Naive thymus-derived CD4-positive, alpha-beta T cell (primary cell): ENCODE measurements at regions of chr20 and their contacts with region 1.

Region 1: GRCh38 chr20:37178839-37179670 is at the starts of genes MROH8 and RPN2:
- DNase-seq: peak; percentile 83 to 95 (median 92)
- ATAC-seq: peak; percentile 96
- H3K4me3 ChIP-seq: peak within 1 kb of the TSS; percentile 85
- H3K4me3 Mint-ChIP-seq: peak within 1 kb of the TSS; percentile 89 to 99 (median 96)
- H3K27ac ChIP-seq: peak within 1 kb of the TSS; percentile 87
- H3K27ac Mint-ChIP-seq: peak within 1 kb of the TSS; percentile 94 to 99 (median 97)
- H3K4me1 ChIP-seq: peaks cover 13 to 15% of the 10 kb centered on the region in 2 donors
- H3K4me1 Mint-ChIP-seq: peaks cover 34 to 48% (median 36%) of the 10 kb centered on the region in 7 donors
- H3K27me3 ChIP-seq: no peaks in the 10 kb centered on the region
- H3K27me3 Mint-ChIP-seq: peaks cover 0 to 6% (median 0%) of the 10 kb centered on the region in 5 donors
- total RNA-seq, gene MROH8: 1.2 to 1.9 (median 1.6) TPM
- total RNA-seq, gene RPN2: 88.7 to 222 (median 108) TPM

Region 2: GRCh38 chr20:36050436-36051317 is 1128.4 kb before region 1 on chr20:
- CTCF ChIA-PET with region 1: no interaction called
- POLR2A ChIA-PET with region 1: no interaction called
- intact Hi-C with region 1: loop called in 1 of 2 experiments (anchors 5 kb)
- DNase-seq: peak; percentile 72 to 89 (median 83)
- ATAC-seq: peak; percentile 97
- H3K4me3 ChIP-seq: peak overlapping the region; percentile 91
- H3K4me3 Mint-ChIP-seq: peak overlapping the region; percentile 86 to 98 (median 92)
- H3K27ac ChIP-seq: peak overlapping the region; percentile 91
- H3K27ac Mint-ChIP-seq: peak overlapping the region; percentile 85 to 96 (median 92)
- H3K4me1 ChIP-seq: peaks cover 6 to 12% of the 10 kb centered on the region in 2 donors
- H3K4me1 Mint-ChIP-seq: peaks cover 35 to 55% (median 49%) of the 10 kb centered on the region in 7 donors
- H3K27me3 ChIP-seq: no peaks in the 10 kb centered on the region
- H3K27me3 Mint-ChIP-seq: peaks cover 0 to 14% (median 3%) of the 10 kb centered on the region in 5 donors

Region 3: DNA sequence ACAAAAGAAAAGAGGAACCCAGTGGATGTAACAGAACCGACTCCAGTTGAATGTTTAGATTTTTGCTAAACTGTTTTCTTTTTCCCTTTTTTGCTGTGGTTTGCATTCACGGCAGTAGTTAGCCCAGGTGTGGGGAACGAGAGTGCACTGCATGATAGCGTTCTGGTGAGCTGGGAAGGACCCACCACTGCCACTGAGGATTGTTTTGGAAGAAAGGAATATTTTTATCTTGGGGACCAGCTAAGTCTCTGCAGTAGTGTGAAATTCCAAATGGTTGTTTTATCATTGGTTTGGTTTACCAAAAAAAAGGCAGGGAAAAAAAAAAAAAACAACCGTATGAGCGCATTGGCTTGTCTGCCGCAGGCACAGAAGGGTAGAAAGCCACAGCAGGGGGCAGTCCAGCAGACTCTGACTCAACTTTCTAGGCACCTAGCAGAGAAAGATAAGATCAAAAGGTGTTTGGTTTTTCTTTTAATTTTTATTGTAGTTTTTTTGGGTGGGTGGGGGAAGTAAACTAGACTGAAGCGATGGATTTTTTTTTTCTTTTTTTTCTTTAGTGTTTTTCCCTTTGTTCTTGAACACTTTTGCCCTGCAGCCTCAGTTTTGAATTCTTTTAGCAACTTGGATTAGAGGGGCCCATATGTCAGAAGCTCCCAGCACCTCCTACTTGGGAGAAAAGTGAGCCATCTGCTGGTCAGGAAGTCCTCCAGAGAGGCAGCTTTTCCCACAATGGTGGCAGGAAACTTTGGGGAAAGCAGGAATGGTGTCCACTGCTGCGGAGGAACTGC is 587.0 kb before region 1 on chr20:
- CTCF ChIA-PET with region 1: no interaction called
- POLR2A ChIA-PET with region 1: no interaction called
- intact Hi-C with region 1: loop called in 1 of 2 experiments (anchors 10 kb)
- DNase-seq: peak in 6 of 9 donors; percentile 23 to 61 (median 42)
- ATAC-seq: peak; percentile 40
- H3K4me3 ChIP-seq: no peak overlapping the region
- H3K4me3 Mint-ChIP-seq: peak overlapping the region in 7 of 10 donors; percentile 22 to 60 (median 42)
- H3K27ac ChIP-seq: peak overlapping the region; percentile 56
- H3K27ac Mint-ChIP-seq: peak overlapping the region; percentile 42 to 90 (median 88)
- H3K4me1 ChIP-seq: peaks cover 14 to 16% of the 10 kb centered on the region in 2 donors
- H3K4me1 Mint-ChIP-seq: peaks cover 33 to 61% (median 48%) of the 10 kb centered on the region in 7 donors
- H3K27me3 ChIP-seq: no peaks in the 10 kb centered on the region
- H3K27me3 Mint-ChIP-seq: no peaks in the 10 kb centered on the region

Region 4: GRCh38 chr20:36932476-36933426 is 246.3 kb before region 1 on chr20:
- CTCF ChIA-PET with region 1: no interaction called
- POLR2A ChIA-PET with region 1: interaction called, 4 read pairs
- intact Hi-C with region 1: loop called in 1 of 2 experiments (anchors 5 kb)
- DNase-seq: no peak
- ATAC-seq: no peak
- H3K4me3 ChIP-seq: no peak overlapping the region
- H3K4me3 Mint-ChIP-seq: peak overlapping the region in 8 of 10 donors; percentile 7 to 87 (median 48)
- H3K27ac ChIP-seq: peak overlapping the region; percentile 34
- H3K27ac Mint-ChIP-seq: peak overlapping the region; percentile 71 to 99 (median 96)
- H3K4me1 ChIP-seq: peaks cover 47 to 64% of the 10 kb centered on the region in 2 donors
- H3K4me1 Mint-ChIP-seq: peaks cover 18 to 83% (median 61%) of the 10 kb centered on the region in 7 donors
- H3K27me3 ChIP-seq: no peaks in the 10 kb centered on the region
- H3K27me3 Mint-ChIP-seq: no peaks in the 10 kb centered on the region

Region 5: DNA sequence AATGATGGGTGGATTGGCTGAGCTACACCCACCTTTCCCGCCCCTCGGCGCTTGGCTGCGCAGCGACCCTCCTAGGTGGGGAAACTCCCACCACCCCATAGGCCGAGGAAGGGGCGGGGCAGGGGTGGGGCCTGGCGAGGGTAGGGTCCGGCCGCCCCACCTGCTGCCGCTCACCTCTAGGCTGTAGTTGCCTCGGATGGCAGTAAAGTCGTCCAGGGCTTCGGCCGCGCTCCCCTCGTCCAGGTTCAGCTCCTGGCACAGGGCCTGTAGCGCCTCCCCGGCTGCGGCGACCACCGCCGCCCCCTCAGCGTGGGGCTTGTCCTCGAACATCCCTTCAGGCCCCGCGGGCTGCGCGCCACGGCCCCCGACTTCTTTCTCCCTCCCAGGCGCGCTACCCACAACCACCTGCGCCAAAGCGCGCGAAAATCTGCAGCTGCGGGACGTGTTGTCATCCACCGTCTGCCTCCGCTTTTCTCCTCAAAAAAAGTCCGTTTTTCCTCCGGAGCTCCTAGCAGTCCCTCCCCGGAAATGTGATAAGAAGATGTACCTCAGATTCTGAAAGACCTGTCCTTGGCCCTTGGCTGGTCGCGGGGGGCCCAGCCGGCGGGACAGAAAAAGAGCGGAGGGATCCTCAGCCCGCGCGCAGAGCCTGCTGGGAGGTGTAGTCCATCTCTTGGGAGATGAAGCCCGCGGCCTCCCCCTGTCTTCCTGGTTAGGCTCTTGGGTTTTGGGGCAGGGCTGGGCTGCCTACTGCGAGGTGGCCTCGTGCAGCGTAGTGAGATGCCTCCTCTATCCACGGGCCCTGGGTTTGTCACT is 83.2 kb before region 1 on chr20 and contains the start of gene RBL1:
- CTCF ChIA-PET with region 1: interaction called, 3 read pairs
- POLR2A ChIA-PET with region 1: interaction called, 20 read pairs
- intact Hi-C with region 1: loop called (anchors 1 kb)
- DNase-seq: peak; percentile 72 to 93 (median 91)
- ATAC-seq: peak; percentile 91
- H3K4me3 ChIP-seq: peak within 1 kb of the TSS; percentile 93
- H3K4me3 Mint-ChIP-seq: peak within 1 kb of the TSS; percentile 88 to 100 (median 98)
- H3K27ac ChIP-seq: peak within 1 kb of the TSS; percentile 91
- H3K27ac Mint-ChIP-seq: peak within 1 kb of the TSS; percentile 96 to 100 (median 100)
- H3K4me1 ChIP-seq: peaks cover 17 to 18% of the 10 kb centered on the region in 2 donors
- H3K4me1 Mint-ChIP-seq: peaks cover 15 to 42% (median 34%) of the 10 kb centered on the region in 7 donors
- H3K27me3 ChIP-seq: no peaks in the 10 kb centered on the region
- H3K27me3 Mint-ChIP-seq: peaks cover 0 to 6% (median 0%) of the 10 kb centered on the region in 5 donors
- total RNA-seq, gene RBL1: 27.4 to 51.2 (median 30.6) TPM

Region 6: GRCh38 chr20:37294262-37294981 is 115.4 kb after region 1 on chr20:
- CTCF ChIA-PET with region 1: interaction called, 4 read pairs
- POLR2A ChIA-PET with region 1: no interaction called
- intact Hi-C with region 1: loop called in 1 of 2 experiments (anchors 1 kb)
- DNase-seq: no peak
- ATAC-seq: peak; percentile 52
- H3K4me3 ChIP-seq: no peak overlapping the region
- H3K4me3 Mint-ChIP-seq: peak overlapping the region in 1 of 10 donors; percentile 3
- H3K27ac ChIP-seq: no peak overlapping the region
- H3K27ac Mint-ChIP-seq: peak overlapping the region in 1 of 9 donors; percentile 39
- H3K4me1 ChIP-seq: peaks cover 13 to 14% of the 10 kb centered on the region in 2 donors
- H3K4me1 Mint-ChIP-seq: peaks cover 34 to 69% (median 62%) of the 10 kb centered on the region in 7 donors
- H3K27me3 ChIP-seq: no peaks in the 10 kb centered on the region
- H3K27me3 Mint-ChIP-seq: no peaks in the 10 kb centered on the region

Region 7: DNA sequence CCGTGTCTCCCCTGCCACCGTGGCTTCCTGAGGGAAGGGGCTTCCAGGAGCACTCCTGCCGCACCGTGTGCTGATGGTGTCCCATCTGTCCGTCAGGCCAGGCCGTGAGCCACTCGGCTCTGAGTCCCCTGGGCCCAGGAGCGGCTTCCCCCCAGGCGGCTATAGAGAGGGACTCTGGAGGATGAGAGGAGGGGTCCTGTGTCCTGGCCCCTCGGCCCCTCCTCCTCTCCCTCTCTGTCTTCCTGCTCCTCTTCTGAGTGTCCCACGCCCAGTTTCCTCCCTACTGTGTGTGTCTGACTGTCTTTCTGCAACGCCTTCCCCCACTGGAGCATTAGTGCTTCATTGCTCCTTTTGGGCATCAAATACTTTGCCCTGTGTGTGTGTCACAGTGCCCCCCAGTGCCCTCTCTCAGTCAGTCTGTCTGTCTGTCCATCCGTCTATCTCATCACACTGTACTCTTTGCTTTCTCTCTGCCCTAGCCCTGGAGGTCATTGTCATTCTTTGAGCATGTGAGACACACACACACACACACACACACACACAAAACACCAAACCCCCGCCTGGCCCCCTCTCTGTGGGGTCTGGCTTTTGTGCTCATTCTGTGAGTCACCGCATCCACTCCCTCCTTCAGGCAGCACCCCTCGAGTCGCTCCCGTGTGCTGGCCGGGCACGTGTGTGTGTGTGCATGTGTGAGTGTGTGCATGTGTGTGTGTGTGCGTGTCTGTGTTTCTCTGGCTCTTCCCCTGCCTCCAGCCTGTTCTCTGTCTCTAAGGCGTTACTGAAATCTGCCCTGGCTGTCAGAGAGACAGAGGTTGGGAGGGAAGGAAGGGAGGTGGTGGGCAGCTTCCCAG is 238.8 kb after region 1 on chr20:
- CTCF ChIA-PET with region 1: no interaction called
- POLR2A ChIA-PET with region 1: no interaction called
- intact Hi-C with region 1: no loop called
- DNase-seq: no peak
- ATAC-seq: no peak
- H3K4me3 ChIP-seq: no peak overlapping the region
- H3K4me3 Mint-ChIP-seq: no peak overlapping the region
- H3K27ac ChIP-seq: no peak overlapping the region
- H3K27ac Mint-ChIP-seq: no peak overlapping the region
- H3K4me1 ChIP-seq: no peaks in the 10 kb centered on the region
- H3K4me1 Mint-ChIP-seq: peaks cover 0 to 14% (median 8%) of the 10 kb centered on the region in 7 donors
- H3K27me3 ChIP-seq: no peaks in the 10 kb centered on the region
- H3K27me3 Mint-ChIP-seq: peaks cover 0 to 24% (median 18%) of the 10 kb centered on the region in 5 donors

Region 8: GRCh38 chr20:37693635-37694626 is 514.9 kb after region 1 on chr20 and contains the start of gene CTNNBL1:
- CTCF ChIA-PET with region 1: no interaction called
- POLR2A ChIA-PET with region 1: no interaction called
- intact Hi-C with region 1: loop called (anchors 2 kb)
- DNase-seq: peak; percentile 83 to 94 (median 93)
- ATAC-seq: peak; percentile 99
- H3K4me3 ChIP-seq: peak within 1 kb of the TSS; percentile 80
- H3K4me3 Mint-ChIP-seq: peak within 1 kb of the TSS; percentile 96 to 100 (median 99)
- H3K27ac ChIP-seq: peak within 1 kb of the TSS; percentile 76
- H3K27ac Mint-ChIP-seq: peak within 1 kb of the TSS; percentile 87 to 96 (median 93)
- H3K4me1 ChIP-seq: peaks cover 9 to 20% of the 10 kb centered on the region in 2 donors
- H3K4me1 Mint-ChIP-seq: peaks cover 19 to 53% (median 42%) of the 10 kb centered on the region in 7 donors
- H3K27me3 ChIP-seq: no peaks in the 10 kb centered on the region
- H3K27me3 Mint-ChIP-seq: peaks cover 12 to 22% (median 16%) of the 10 kb centered on the region in 5 donors
- total RNA-seq, gene CTNNBL1: 41.7 to 72.9 (median 49.1) TPM